Stomach (tissue), 19 donors: ENCODE measurements at regions of chr2 and their contacts with region 1.

Region 1: GRCh38 chr2:237923481-237924163 is 43.2 kb upstream of the UBE2F start:
- DNase-seq: peak; percentile 67 to 88
- H3K4me3 ChIP-seq: peak overlapping the region; percentile 19 to 37 (median 27)
- H3K27ac ChIP-seq: peak overlapping the region in 4 of 5 donors; percentile 46 to 78 (median 64)
- H3K4me1 ChIP-seq: peaks cover 0 to 21% (median 10%) of the 10 kb centered on the region in 4 donors
- H3K27me3 ChIP-seq: no peaks in the 10 kb centered on the region
- CTCF ChIP-seq: peak in 5 of 7 experiments; percentile 56 to 97 (median 92)
- EP300 ChIP-seq: no peak
- POLR2A ChIP-seq: no peak

Region 2: GRCh38 chr2:237858294-237859081 is 65.1 kb before region 1 on chr2:
- intact Hi-C with region 1: loop called (anchors 10 kb)
- DNase-seq: peak; percentile 69 to 92
- H3K4me3 ChIP-seq: peak overlapping the region; percentile 60 to 67 (median 63)
- H3K27ac ChIP-seq: peak overlapping the region in 3 of 5 donors; percentile 83 to 93 (median 91)
- H3K4me1 ChIP-seq: peaks cover 29 to 53% (median 46%) of the 10 kb centered on the region in 4 donors
- H3K27me3 ChIP-seq: peaks cover 0 to 36% (median 7%) of the 10 kb centered on the region in 3 donors
- CTCF ChIP-seq: peak in 5 of 7 experiments; percentile 59 to 86 (median 68)
- EP300 ChIP-seq: no peak
- POLR2A ChIP-seq: no peak

Region 3: GRCh38 chr2:237935740-237936452 is 12.3 kb after region 1 on chr2:
- intact Hi-C with region 1: no loop called
- DNase-seq: peak in 1 of 2 donors; percentile 34
- H3K4me3 ChIP-seq: no peak overlapping the region
- H3K27ac ChIP-seq: no peak overlapping the region
- H3K4me1 ChIP-seq: peaks cover 0 to 16% (median 6%) of the 10 kb centered on the region in 4 donors
- H3K27me3 ChIP-seq: no peaks in the 10 kb centered on the region
- CTCF ChIP-seq: no peak
- EP300 ChIP-seq: no peak
- POLR2A ChIP-seq: no peak

Region 4: GRCh38 chr2:238097998-238098871 is 174.6 kb after region 1 on chr2:
- intact Hi-C with region 1: no loop called
- DNase-seq: peak; percentile 56 to 69
- H3K4me3 ChIP-seq: no peak overlapping the region
- H3K27ac ChIP-seq: peak overlapping the region in 4 of 5 donors; percentile 8 to 64 (median 18)
- H3K4me1 ChIP-seq: peaks cover 0 to 19% (median 2%) of the 10 kb centered on the region in 4 donors
- H3K27me3 ChIP-seq: no peaks in the 10 kb centered on the region
- CTCF ChIP-seq: no peak
- EP300 ChIP-seq: no peak
- POLR2A ChIP-seq: no peak